ENCODE measurements at regions of chr18 and their contacts with region 1.

Region 1: GRCh38 chr18:48800876-48801727 is 149.7 kb downstream of the SMAD7 start:
- DNase-seq: peak; percentile 37
- ATAC-seq: peak; percentile 72
- H3K4me3 ChIP-seq: no peak overlapping the region
- H3K4me3 Mint-ChIP-seq: peak overlapping the region; percentile 63
- H3K27ac ChIP-seq: no peak overlapping the region
- H3K27ac Mint-ChIP-seq: peak overlapping the region; percentile 8
- H3K4me1 ChIP-seq: peaks cover 19 to 29% of the 10 kb centered on the region in 2 donors
- H3K4me1 Mint-ChIP-seq: peaks cover 43% of the 10 kb centered on the region
- H3K27me3 ChIP-seq: no peaks in the 10 kb centered on the region
- H3K27me3 Mint-ChIP-seq: no peaks in the 10 kb centered on the region
- CTCF ChIP-seq: no peak

Region 2: GRCh38 chr18:48238206-48238605 is 562.9 kb before region 1 on chr18:
- CTCF ChIA-PET with region 1: no interaction called
- POLR2A ChIA-PET with region 1: no interaction called
- intact Hi-C with region 1: no loop called
- DNase-seq: no peak
- ATAC-seq: no peak
- H3K4me3 ChIP-seq: no peak overlapping the region
- H3K4me3 Mint-ChIP-seq: no peak overlapping the region
- H3K27ac ChIP-seq: no peak overlapping the region
- H3K27ac Mint-ChIP-seq: no peak overlapping the region
- H3K4me1 ChIP-seq: no peaks in the 10 kb centered on the region
- H3K4me1 Mint-ChIP-seq: no peaks in the 10 kb centered on the region
- H3K27me3 ChIP-seq: peaks cover 0 to 7% (median 3%) of the 10 kb centered on the region in 4 experiments
- H3K27me3 Mint-ChIP-seq: peaks cover 38% of the 10 kb centered on the region
- CTCF ChIP-seq: no peak

Region 3: DNA sequence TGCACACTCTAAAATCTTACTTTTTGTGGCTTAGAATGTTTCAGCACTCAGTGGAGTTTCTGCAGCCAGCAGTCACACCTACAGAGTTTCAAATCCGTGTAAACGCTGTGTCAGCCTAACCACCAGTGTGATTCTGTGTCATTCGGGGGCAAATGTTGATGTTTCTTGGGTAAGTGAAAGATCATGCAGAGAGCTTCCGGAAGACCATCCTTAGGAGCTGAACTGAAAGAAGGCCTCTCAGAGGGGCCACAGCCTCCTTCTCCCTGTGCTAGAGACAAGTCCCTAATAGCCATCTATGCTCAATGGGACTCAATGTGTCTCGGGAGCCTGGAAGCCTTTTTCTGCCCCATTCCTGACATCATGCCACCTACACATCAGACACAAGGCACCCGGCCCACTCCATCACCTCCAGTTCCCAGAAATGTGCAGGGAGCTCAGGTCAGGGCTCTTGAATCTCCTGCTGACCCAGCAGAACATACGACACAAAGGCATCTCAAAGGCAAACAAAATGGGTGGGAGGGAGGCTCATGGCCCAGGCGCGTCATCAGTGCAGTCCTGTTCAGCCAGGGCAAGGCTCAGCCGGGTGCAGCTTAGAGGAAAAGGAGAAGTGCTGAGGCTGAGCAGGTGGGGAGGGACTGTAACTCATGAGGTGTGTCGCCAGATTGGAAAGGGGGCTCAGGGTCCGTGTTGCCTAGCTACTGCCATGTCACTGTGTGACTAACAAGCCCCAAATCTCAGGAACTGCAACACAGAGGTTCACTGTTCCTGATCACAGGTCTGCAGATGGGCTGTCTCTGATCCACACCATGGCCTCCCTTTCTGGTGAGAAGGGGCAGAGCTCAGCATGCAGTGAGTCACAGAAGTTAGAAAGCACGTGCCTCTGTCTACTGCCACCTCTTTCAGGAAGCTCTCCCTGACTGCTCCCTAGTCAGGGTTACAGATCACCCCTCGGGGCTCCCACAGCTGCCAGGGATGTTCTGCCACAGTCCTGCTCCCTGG is 67.7 kb after region 1 on chr18:
- CTCF ChIA-PET with region 1: no interaction called
- POLR2A ChIA-PET with region 1: no interaction called
- intact Hi-C with region 1: loop called (anchors 1 kb)
- DNase-seq: peak; percentile 94
- ATAC-seq: peak; percentile 94
- H3K4me3 ChIP-seq: no peak overlapping the region
- H3K4me3 Mint-ChIP-seq: peak overlapping the region; percentile 51
- H3K27ac ChIP-seq: peak overlapping the region; percentile 67 to 78
- H3K27ac Mint-ChIP-seq: peak overlapping the region; percentile 94
- H3K4me1 ChIP-seq: peaks cover 17 to 26% of the 10 kb centered on the region in 2 donors
- H3K4me1 Mint-ChIP-seq: peaks cover 17% of the 10 kb centered on the region
- H3K27me3 ChIP-seq: no peaks in the 10 kb centered on the region
- H3K27me3 Mint-ChIP-seq: no peaks in the 10 kb centered on the region
- CTCF ChIP-seq: no peak